Activated CD4-positive, alpha-beta memory T cell treated with anti-CD3 and anti-CD28 coated beads for 36 hours (primary cell): ENCODE measurements at regions of chr3 and their contacts with region 1.

Region 1: DNA sequence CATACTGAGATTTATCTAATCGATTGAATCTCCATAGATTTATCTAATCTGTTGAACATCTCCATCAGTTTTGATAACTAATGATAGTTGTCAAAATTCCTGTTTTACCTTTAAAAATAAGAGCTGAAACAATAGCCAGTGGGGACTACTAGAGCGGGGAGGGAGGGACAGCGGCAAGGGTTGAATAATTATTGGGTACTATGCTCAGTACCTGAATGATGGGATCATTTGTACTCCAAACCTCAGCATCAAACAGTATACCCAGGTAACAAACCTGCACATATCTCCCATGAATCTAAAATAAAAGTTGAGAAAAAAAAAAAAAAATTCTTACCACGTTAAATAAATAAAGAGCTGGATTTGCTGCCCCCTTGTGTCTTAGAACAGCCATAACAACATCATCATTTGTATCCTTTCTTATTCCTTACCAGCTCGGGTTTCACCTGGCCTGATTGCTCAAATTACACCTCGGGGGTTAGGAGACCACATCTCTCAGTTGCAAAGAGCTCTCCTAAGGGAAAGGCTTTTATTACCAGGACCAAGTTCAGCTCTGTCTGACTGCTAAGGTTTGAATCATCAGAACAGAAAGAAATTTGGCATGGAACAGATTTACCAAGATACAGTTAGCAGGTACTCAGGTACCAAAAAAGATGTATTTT is 25.7 kb upstream of the RPL39L start:
- DNase-seq: peak; percentile 20
- H3K4me3 Mint-ChIP-seq: no peak overlapping the region
- H3K27ac Mint-ChIP-seq: no peak overlapping the region
- H3K4me1 Mint-ChIP-seq: peaks cover 1% of the 10 kb centered on the region
- H3K27me3 Mint-ChIP-seq: peaks cover 3% of the 10 kb centered on the region

Region 2: GRCh38 chr3:186821429-186822367 is 343.3 kb before region 1 on chr3:
- CTCF ChIA-PET with region 1: interaction called, 11 read pairs
- POLR2A ChIA-PET with region 1: no interaction called
- intact Hi-C with region 1: no loop called
- DNase-seq: no peak
- H3K4me3 Mint-ChIP-seq: no peak overlapping the region
- H3K27ac Mint-ChIP-seq: no peak overlapping the region
- H3K4me1 Mint-ChIP-seq: peaks cover 22% of the 10 kb centered on the region
- H3K27me3 Mint-ChIP-seq: peaks cover 10% of the 10 kb centered on the region

Region 3: DNA sequence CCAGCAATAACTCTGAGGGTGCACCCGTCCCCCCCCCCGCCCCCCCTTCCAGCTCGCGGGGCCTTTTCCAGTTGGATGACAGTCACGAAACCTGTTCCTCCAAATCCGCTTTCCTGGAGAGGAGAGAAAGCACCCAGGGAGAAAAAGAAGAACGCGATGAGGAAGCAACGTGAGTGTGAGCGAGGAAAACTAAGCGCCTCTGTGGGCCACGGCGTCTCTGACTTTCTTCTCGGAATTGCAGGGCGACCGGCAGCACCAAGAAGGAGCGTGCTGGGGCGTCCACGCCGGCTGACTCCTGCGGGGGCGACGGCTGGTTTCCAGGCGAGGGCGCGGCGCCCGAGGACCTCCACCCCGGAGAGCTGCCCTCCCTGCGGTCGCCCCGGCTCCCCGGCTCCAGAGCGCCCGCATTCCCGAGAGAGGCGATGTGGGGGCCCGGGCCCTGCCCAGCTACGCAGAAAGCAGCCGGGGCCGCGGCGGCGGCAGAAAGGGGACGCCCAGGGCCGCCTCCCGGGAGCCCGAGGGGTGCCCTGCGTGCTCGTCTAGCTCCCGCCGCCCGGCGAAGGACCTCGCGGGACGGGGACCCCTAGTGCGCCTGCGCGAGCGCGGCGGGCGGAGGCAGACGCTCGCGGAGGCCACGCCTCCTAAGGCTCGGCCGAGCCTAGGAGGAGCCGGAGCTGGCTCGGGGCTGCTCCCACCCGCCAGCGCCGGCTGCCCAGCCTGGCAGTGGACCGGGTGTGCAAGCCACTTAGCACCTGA is 337.9 kb before region 1 on chr3:
- CTCF ChIA-PET with region 1: interaction called, 11 read pairs
- POLR2A ChIA-PET with region 1: interaction called, 5 read pairs
- intact Hi-C with region 1: no loop called
- DNase-seq: peak; percentile 89
- H3K4me3 Mint-ChIP-seq: peak overlapping the region; percentile 83
- H3K27ac Mint-ChIP-seq: peak overlapping the region; percentile 51
- H3K4me1 Mint-ChIP-seq: peaks cover 28% of the 10 kb centered on the region
- H3K27me3 Mint-ChIP-seq: peaks cover 44% of the 10 kb centered on the region

Region 4: DNA sequence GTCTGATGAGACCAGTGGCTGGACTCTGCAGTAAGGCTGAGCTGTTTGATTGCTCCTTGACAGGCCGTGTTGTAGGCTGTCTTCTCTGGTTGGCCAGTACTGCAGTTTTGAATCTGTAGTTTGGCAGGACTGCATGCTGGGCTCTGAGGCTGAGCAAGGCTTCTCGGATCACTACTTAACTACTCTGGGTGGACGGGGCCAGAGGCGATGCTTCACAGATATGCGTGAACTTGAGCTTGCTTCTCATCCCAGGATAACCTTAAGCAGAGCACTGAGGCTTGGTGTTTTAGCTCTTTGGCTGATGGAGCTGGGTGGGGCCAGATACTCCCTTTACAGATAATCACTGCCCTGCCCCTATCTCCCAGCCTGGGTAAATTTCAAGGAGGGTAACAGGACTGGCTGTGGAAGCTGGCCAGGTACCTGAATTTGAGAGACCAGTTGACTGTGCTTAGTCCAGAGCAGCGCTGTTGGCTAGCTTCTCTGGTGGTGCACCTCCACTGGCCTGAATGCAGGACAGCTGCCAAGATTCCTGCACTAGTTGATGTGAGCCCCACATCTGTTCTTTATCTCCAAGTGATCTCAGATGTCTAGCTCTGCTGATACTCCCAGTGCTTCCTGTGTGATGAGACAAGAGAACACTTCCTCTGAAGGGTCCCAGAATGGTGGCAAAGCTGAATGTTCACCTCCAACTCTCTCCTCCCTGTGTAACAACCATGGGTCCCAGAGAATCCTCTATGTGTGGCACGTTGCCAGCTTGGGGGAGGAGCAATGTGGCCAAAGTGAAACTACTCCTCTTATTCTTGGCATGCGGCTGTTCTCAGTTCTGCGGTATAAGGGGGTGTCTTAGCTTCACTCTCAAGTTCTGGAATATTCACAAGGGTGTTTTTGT is 63.6 kb before region 1 on chr3:
- CTCF ChIA-PET with region 1: interaction called, 20 read pairs
- POLR2A ChIA-PET with region 1: no interaction called
- intact Hi-C with region 1: no loop called
- DNase-seq: peak; percentile 68
- H3K4me3 Mint-ChIP-seq: peak overlapping the region; percentile 20
- H3K27ac Mint-ChIP-seq: peak overlapping the region; percentile 28
- H3K4me1 Mint-ChIP-seq: peaks cover 30% of the 10 kb centered on the region
- H3K27me3 Mint-ChIP-seq: no peaks in the 10 kb centered on the region

Region 5: DNA sequence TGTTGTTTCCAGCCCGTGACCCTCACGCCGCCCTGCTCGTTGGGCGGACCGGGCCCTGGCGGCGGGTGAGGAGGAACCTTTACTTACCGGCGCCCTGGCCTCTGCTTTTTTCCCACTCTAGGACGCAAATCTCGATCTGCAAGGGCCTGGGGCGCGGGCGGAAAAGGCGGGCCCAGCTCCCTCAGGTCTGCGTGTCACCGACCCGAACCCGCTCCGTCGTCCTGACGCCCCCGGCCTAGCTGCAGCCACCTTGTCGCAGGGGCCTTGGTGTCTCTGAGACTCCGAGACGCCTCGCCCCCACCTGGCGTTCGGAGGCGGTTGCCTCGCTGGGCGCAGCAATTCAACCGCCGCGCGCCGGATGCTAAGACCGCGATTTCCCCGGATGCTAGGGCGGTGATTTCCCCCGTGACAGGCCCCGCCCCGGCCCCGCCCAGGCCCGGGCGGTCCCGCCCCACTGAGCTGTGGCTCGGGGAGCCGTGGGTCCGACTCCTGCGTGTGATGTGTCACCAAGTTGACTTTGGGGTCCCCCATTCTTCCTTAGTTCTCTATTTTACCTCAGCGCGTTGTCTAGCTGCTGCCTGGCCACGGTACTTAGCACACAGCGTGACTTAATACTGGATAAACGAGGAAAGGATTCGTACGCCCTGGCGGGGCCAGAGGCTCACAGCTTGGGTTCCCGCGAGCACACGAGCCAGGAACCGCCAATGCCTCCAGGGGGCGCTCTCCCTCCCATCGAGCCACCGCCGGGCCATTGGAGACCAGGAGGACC is 25.7 kb before region 1 on chr3 and contains the start of gene RPL39L:
- CTCF ChIA-PET with region 1: interaction called, 66 read pairs
- POLR2A ChIA-PET with region 1: interaction called, 4 read pairs
- intact Hi-C with region 1: no loop called
- DNase-seq: peak; percentile 96
- H3K4me3 Mint-ChIP-seq: peak within 1 kb of the TSS; percentile 91
- H3K27ac Mint-ChIP-seq: peak within 1 kb of the TSS; percentile 93
- H3K4me1 Mint-ChIP-seq: peaks cover 22% of the 10 kb centered on the region
- H3K27me3 Mint-ChIP-seq: no peaks in the 10 kb centered on the region
- total RNA-seq, gene RPL39L: 22.5 to 25.2 TPM